Calu3 (cell line): ENCODE measurements at regions of chr13 and their contacts with region 1.

Region 1: GRCh38 chr13:40149611-40150274 is 494.3 kb downstream of the COG6 start:
- DNase-seq: no peak
- H3K4me3 Mint-ChIP-seq: no peak overlapping the region
- H3K27ac Mint-ChIP-seq: no peak overlapping the region
- H3K4me1 Mint-ChIP-seq: peaks cover 30% of the 10 kb centered on the region
- H3K27me3 Mint-ChIP-seq: no peaks in the 10 kb centered on the region
- CTCF ChIP-seq: no peak

Region 2: DNA sequence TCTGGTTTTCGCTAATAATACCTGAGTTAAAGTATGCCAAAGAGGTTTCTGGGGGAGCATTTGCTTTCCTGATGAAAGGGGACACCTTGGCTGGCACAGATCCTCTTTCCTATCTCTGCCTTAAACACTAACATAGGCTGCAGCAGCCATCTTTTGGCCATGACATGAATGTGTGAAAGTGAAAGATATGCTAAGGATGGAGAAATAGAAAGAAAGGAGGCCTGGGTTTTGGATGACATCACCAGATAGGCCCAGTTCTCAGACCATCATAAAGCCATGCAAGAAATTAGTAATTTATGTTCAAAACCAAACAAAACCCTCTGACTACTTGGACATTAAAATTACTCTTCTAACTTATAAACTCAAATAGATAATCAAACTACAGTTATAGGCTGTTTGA is 214.6 kb before region 1 on chr13:
- CTCF ChIA-PET with region 1: no interaction called
- intact Hi-C with region 1: no loop called
- DNase-seq: no peak
- H3K4me3 Mint-ChIP-seq: no peak overlapping the region
- H3K27ac Mint-ChIP-seq: no peak overlapping the region
- H3K4me1 Mint-ChIP-seq: no peaks in the 10 kb centered on the region
- H3K27me3 Mint-ChIP-seq: no peaks in the 10 kb centered on the region
- CTCF ChIP-seq: no peak

Region 3: GRCh38 chr13:40082639-40083038 is 67.1 kb before region 1 on chr13:
- CTCF ChIA-PET with region 1: no interaction called
- intact Hi-C with region 1: loop called (anchors 10 kb)
- DNase-seq: no peak
- H3K4me3 Mint-ChIP-seq: no peak overlapping the region
- H3K27ac Mint-ChIP-seq: no peak overlapping the region
- H3K4me1 Mint-ChIP-seq: no peaks in the 10 kb centered on the region
- H3K27me3 Mint-ChIP-seq: no peaks in the 10 kb centered on the region
- CTCF ChIP-seq: no peak